Calu3 (cell line): ENCODE measurements at regions of chr11 and their contacts with region 1.

Region 1: DNA sequence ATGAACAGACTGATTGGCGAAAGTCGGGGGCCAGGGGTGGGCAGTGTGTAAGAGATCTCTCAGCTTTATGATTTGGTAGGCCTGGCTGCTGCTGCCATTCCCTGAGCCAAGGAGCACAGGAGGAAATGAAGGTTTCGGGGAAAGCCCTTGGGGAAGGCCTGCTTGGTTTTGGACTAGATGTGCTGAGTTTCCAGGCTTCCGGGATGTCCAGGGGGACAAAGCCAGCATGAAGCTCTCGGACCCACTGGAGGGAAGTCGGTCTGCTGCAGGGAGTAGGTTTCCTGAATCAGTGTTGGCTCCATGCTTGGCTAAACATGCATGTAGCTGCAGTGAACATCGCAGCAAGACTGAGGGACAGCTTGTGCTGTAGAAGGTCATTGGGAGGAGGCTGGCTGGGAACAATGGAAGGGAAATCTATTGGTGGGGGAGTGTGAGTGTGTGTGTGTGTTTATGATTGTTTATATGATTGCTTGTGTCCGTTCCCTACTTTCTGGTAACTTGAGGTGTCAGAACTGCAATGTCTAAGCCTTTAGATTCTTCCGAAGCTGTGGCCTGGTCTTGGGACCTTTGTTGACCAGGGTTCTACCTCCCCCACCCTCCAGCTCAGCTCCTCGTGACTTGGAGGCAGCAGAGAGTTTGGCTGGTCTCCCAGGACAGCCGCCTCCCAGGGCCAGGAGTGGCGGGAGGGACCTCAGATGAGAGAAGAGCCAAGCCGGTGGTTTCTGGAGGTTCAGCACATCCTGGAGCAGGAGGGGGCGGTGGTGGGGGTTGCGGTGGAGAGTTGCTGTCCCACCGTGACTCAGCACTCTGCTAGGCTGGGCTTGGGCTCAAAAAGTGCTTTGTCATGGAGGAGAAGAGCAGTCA is 4.0 kb upstream of the FTH1 start:
- DNase-seq: peak; percentile 97
- H3K4me3 Mint-ChIP-seq: peak overlapping the region; percentile 57
- H3K27ac Mint-ChIP-seq: peak overlapping the region; percentile 98
- H3K4me1 Mint-ChIP-seq: peaks cover 83% of the 10 kb centered on the region
- H3K27me3 Mint-ChIP-seq: no peaks in the 10 kb centered on the region
- CTCF ChIP-seq: no peak

Region 2: GRCh38 chr11:61718621-61719302 is 252.7 kb before region 1 on chr11:
- CTCF ChIA-PET with region 1: no interaction called
- intact Hi-C with region 1: no loop called
- DNase-seq: no peak
- H3K4me3 Mint-ChIP-seq: no peak overlapping the region
- H3K27ac Mint-ChIP-seq: no peak overlapping the region
- H3K4me1 Mint-ChIP-seq: peaks cover 13% of the 10 kb centered on the region
- H3K27me3 Mint-ChIP-seq: no peaks in the 10 kb centered on the region
- CTCF ChIP-seq: no peak

Region 3: GRCh38 chr11:62046281-62047100 is 75.0 kb after region 1 on chr11:
- CTCF ChIA-PET with region 1: interaction called, 4 read pairs
- intact Hi-C with region 1: loop called (anchors 1 kb)
- DNase-seq: no peak
- H3K4me3 Mint-ChIP-seq: peak overlapping the region; percentile 22
- H3K27ac Mint-ChIP-seq: peak overlapping the region; percentile 88
- H3K4me1 Mint-ChIP-seq: peaks cover 59% of the 10 kb centered on the region
- H3K27me3 Mint-ChIP-seq: no peaks in the 10 kb centered on the region
- CTCF ChIP-seq: no peak

Region 4: DNA sequence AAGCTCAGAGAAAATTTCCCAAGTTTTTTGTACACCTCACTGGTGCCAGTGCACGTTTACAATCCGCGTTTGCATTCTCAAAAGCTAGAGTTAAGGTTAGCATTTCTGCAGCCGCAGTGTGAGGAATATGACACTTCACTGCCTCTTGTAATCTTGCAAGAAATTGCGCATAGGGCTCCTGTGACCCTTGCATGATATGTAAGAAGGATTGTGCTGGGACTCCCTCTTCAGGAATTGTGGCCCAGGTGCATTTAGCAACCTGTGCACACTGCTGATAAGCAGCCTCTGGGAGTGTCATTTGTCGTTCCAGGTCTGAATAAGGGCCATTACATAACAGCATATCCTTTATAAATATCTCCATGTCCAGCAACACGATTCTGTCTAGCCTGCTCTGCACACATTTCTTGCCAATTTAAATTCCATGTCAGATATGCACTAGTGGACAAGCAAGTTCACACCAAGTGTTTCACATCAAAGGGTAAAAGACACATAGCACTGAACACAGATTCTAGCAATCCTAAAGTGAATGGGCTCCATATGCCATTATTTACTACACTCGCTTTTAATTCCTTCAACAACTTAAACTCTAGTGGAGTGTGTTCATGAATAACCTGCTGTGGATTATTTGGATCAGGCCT is 83.1 kb after region 1 on chr11:
- CTCF ChIA-PET with region 1: interaction called, 6 read pairs
- intact Hi-C with region 1: loop called (anchors 2 kb)
- DNase-seq: peak; percentile 66
- H3K4me3 Mint-ChIP-seq: peak overlapping the region; percentile 8
- H3K27ac Mint-ChIP-seq: no peak overlapping the region
- H3K4me1 Mint-ChIP-seq: peaks cover 16% of the 10 kb centered on the region
- H3K27me3 Mint-ChIP-seq: no peaks in the 10 kb centered on the region
- CTCF ChIP-seq: peak; percentile 62

Region 5: GRCh38 chr11:62132188-62132587 is 160.7 kb after region 1 on chr11:
- CTCF ChIA-PET with region 1: no interaction called
- intact Hi-C with region 1: no loop called
- DNase-seq: no peak
- H3K4me3 Mint-ChIP-seq: no peak overlapping the region
- H3K27ac Mint-ChIP-seq: no peak overlapping the region
- H3K4me1 Mint-ChIP-seq: peaks cover 20% of the 10 kb centered on the region
- H3K27me3 Mint-ChIP-seq: no peaks in the 10 kb centered on the region
- CTCF ChIP-seq: no peak

Region 6: GRCh38 chr11:62678770-62679696 is 707.6 kb after region 1 on chr11 and contains the start of gene UBXN1:
- CTCF ChIA-PET with region 1: no interaction called
- intact Hi-C with region 1: no loop called
- DNase-seq: peak; percentile 83
- H3K4me3 Mint-ChIP-seq: peak within 1 kb of the TSS; percentile 86
- H3K27ac Mint-ChIP-seq: peak within 1 kb of the TSS; percentile 84
- H3K4me1 Mint-ChIP-seq: peaks cover 24% of the 10 kb centered on the region
- H3K27me3 Mint-ChIP-seq: no peaks in the 10 kb centered on the region
- CTCF ChIP-seq: no peak
- total RNA-seq, gene UBXN1: 91.9 and 98.7 TPM in 2 replicates